ENCODE measurements at regions of chr1 and their contacts with region 1.

Region 1: DNA sequence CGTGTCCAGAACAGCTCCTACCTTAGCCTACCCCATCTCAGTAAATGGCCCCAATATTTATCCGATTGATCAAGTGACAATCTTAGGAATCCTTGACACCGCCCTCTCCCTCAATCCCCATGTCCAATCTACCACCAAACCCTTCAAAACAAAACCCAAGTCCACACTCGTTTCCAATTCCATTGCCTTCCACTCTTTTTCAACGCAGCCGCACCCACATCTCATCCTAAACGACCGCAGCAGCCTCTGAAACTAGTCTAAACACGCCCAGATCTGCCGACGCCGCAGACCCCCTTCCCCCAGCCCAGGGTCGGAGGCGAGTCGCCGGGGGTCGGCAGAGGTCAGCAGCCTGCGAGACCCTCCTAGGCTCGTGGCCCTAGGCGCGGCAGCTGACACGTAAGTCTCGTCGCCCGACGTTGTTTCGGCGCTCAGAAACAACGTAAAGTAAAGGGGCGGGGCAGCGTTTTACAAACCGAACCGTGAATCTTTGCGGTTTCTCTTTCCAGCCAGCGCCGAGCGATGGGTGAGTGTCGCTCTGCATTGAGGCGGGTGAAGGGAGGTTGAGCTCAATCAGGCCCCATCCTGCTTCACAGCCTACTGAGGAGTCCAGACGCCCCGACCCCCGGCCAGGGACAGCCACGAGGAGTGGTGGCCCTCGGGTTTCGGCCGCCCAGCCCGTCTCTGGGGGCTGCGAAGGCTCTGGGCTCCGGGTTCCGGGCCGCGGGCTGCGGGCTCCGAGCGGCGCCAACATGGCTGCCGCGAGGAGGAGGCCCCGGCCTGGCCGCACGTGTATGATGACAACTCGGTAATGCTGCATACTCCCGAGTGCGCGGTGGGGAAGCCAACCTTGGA is at the start of gene RPS8:
- DNase-seq: peak; percentile 96
- ATAC-seq: peak; percentile 94
- total RNA-seq, gene RPS8: 833 TPM

Region 2: GRCh38 chr1:44739361-44740178 is 35.7 kb before region 1 on chr1 and contains the start of gene KIF2C:
- intact Hi-C with region 1: loop called (anchors 2 kb)
- DNase-seq: peak; percentile 97
- ATAC-seq: peak; percentile 100
- total RNA-seq, gene KIF2C: 0.87 TPM

Region 3: DNA sequence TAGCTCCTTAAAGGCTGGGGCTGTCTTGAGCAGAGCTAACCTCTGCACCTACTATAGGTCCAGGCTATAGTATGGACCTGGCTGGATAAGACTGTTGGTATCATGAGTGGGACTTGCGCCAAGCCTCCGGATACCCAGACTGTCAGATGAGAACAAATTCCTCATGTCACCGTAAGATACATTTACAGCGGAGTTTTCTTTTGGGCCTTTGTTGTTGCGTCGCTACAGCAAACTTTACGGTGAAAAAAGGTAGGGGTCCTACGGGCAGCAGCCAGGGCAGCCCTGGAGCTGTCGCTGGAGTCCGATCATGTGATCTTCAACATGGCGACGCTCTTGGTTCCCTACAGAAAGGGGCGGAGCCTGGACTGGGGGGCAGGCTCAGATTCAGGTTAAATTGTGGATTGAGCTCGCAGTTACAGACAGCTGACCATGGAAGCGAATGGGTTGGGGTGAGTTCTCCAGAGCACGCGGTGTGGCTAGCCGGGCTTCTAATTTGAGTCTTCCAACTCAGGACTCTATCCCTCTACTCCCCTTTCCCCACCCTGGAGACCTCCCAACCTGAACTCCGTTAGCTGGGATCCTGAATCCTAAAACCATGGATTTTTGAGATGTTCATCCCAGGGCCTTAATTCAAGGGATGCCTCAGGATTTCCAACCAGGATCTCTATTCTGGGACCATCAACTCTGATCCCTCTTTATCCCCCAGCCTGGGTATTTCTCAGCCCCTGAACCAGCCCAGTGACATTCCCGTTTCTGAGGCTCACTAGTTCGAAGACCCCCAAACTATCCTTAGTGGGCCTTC is 236.7 kb after region 1 on chr1 and contains the start of gene UROD:
- intact Hi-C with region 1: loop called (anchors 5 kb)
- DNase-seq: peak; percentile 96
- ATAC-seq: peak; percentile 95
- total RNA-seq, gene UROD: 71.7 TPM